ENCODE measurements at regions of chr17 and their contacts with region 1.

Region 1: DNA sequence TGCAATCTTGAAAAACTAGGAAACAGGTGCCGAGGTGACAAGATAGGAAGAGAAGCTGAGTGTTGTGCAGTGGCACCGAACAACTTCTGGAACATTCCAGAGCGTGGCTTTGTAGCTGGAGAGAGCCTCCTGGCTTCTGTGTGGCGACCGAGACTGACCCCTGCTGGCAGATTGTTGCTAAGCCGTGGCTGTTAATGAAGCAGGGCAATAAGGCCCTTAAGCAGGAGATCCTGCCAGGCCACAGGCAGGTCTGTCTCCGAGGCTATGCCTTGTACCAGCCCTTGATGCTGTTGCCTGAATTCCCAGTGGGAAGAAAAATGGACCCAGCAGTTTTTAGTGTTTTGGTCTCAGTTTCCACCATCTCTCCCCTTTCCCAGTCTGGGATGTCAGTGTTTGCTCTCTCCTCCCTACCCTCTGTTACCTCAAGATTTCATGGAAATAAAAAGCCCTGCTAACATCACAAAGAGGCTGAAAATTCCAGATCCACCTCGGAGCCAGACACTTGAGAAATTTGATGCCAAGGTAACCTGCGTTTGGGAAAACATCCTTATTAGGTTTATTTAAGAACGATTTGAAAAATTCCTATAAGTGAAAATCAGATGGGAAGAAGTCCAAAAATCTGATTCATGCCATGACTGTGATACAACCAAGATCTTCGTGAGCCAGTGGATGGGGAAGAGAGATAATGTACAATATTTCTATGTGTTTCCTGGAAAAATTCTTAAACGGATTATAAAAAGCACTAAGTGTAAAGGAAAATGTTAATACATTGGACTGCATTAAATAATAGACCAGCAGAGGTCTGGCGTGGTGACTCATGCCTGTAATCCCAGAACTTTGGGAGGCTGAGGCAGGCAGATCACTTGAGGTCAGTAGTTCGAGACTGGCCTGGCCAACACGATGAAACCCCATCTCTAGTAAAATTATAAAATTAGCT is 265.1 kb downstream of the PRKCA start:
- DNase-seq: peak; percentile 59 to 68 (median 67)
- H3K4me3 ChIP-seq: no peak overlapping the region
- H3K4me3 Mint-ChIP-seq: no peak overlapping the region
- H3K27ac ChIP-seq: no peak overlapping the region
- H3K27ac Mint-ChIP-seq: peak overlapping the region in 1 of 7 donors; percentile 50
- H3K4me1 ChIP-seq: no peaks in the 10 kb centered on the region
- H3K4me1 Mint-ChIP-seq: peaks cover 13% of the 10 kb centered on the region
- H3K27me3 ChIP-seq: no peaks in the 10 kb centered on the region
- H3K27me3 Mint-ChIP-seq: peaks cover 1% of the 10 kb centered on the region in 3 donors
- CTCF ChIP-seq: peak; percentile 95

Region 2: GRCh38 chr17:65813306-65813705 is 754.2 kb before region 1 on chr17:
- intact Hi-C with region 1: no loop called
- DNase-seq: no peak
- H3K4me3 ChIP-seq: no peak overlapping the region
- H3K4me3 Mint-ChIP-seq: no peak overlapping the region
- H3K27ac ChIP-seq: no peak overlapping the region
- H3K27ac Mint-ChIP-seq: no peak overlapping the region
- H3K4me1 ChIP-seq: no peaks in the 10 kb centered on the region
- H3K4me1 Mint-ChIP-seq: no peaks in the 10 kb centered on the region
- H3K27me3 ChIP-seq: no peaks in the 10 kb centered on the region
- H3K27me3 Mint-ChIP-seq: peaks cover 0 to 2% (median 1%) of the 10 kb centered on the region in 3 donors
- CTCF ChIP-seq: no peak

Region 3: DNA sequence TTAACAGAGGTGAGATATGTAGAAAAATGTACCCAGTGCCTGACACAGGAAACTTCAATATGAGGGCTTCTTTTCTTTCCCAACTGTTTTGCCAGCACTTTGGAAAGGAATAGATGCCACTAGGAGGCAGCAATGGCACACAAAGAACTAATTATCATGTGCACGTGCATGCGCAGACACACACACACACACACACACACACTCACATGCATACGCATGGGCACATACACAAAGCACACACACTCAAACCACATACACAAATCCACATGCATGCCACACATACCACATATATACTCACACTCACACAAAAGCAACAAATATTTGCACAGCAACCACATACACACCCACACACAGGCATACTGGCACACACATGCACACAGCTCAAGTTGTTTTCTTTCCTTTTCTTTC is 366.8 kb before region 1 on chr17:
- intact Hi-C with region 1: loop called in 1 of 2 experiments (anchors 5 kb)
- DNase-seq: peak; percentile 32 to 47 (median 41)
- H3K4me3 ChIP-seq: no peak overlapping the region
- H3K4me3 Mint-ChIP-seq: no peak overlapping the region
- H3K27ac ChIP-seq: no peak overlapping the region
- H3K27ac Mint-ChIP-seq: no peak overlapping the region
- H3K4me1 ChIP-seq: no peaks in the 10 kb centered on the region
- H3K4me1 Mint-ChIP-seq: peaks cover 3% of the 10 kb centered on the region
- H3K27me3 ChIP-seq: no peaks in the 10 kb centered on the region
- H3K27me3 Mint-ChIP-seq: peaks cover 0 to 6% (median 0%) of the 10 kb centered on the region in 3 donors
- CTCF ChIP-seq: peak; percentile 43

Region 4: DNA sequence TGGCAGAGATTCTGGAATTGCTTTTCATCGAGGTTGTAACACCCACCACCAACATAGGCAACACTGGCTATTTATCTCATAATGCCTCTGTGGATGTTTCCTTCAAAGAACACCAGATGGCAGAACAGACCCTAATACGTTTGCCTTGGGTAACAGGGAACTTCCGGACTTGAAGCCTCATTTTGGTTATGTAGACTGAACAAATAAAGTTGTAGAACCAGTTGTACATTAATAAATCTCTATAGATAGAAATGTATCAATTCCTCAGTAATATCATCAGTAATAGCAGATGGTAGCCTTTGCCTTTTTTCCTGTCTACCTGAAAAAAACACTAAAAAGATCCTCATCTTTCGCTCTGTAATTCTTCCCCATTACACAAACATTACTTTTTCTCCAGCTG is 312.4 kb before region 1 on chr17:
- intact Hi-C with region 1: loop called (anchors 2 kb)
- DNase-seq: peak; percentile 21 to 44 (median 24)
- H3K4me3 ChIP-seq: no peak overlapping the region
- H3K4me3 Mint-ChIP-seq: no peak overlapping the region
- H3K27ac ChIP-seq: no peak overlapping the region
- H3K27ac Mint-ChIP-seq: no peak overlapping the region
- H3K4me1 ChIP-seq: peaks cover 4 to 10% of the 10 kb centered on the region in 2 donors
- H3K4me1 Mint-ChIP-seq: peaks cover 9% of the 10 kb centered on the region
- H3K27me3 ChIP-seq: peaks cover 0 to 3% of the 10 kb centered on the region in 2 donors
- H3K27me3 Mint-ChIP-seq: peaks cover 6 to 19% (median 12%) of the 10 kb centered on the region in 3 donors
- CTCF ChIP-seq: peak; percentile 55